Heart right ventricle (tissue), 16 donors: ENCODE measurements at regions of chr1 and their contacts with region 1.

Region 1: GRCh38 chr1:210394281-210394821 is 65.6 kb downstream of the HHAT start:
- DNase-seq: peak in 1 of 2 donors; percentile 21
- ATAC-seq: peak in 7 of 8 donors; percentile 55 to 87 (median 72)
- H3K4me3 ChIP-seq: no peak overlapping the region
- H3K27ac ChIP-seq: peak overlapping the region in 8 of 10 donors; percentile 22 to 71 (median 58)
- H3K4me1 ChIP-seq: peaks cover 0 to 21% (median 0%) of the 10 kb centered on the region in 9 donors
- H3K27me3 ChIP-seq: no peaks in the 10 kb centered on the region
- CTCF ChIP-seq: no peak

Region 2: GRCh38 chr1:210200124-210200736 is 194.1 kb before region 1 on chr1:
- intact Hi-C with region 1: loop called in 1 of 10 experiments (anchors 10 kb)
- DNase-seq: no peak
- ATAC-seq: no peak
- H3K4me3 ChIP-seq: no peak overlapping the region
- H3K27ac ChIP-seq: no peak overlapping the region
- H3K4me1 ChIP-seq: no peaks in the 10 kb centered on the region
- H3K27me3 ChIP-seq: peaks cover 0 to 8% (median 3%) of the 10 kb centered on the region in 7 donors
- CTCF ChIP-seq: peak in 6 of 9 donors; percentile 7 to 50 (median 32)

Region 3: GRCh38 chr1:210360852-210361477 is 33.4 kb before region 1 on chr1:
- intact Hi-C with region 1: loop called in 2 of 10 experiments (anchors 5 kb)
- DNase-seq: no peak
- ATAC-seq: peak in 7 of 8 donors; percentile 24 to 60 (median 56)
- H3K4me3 ChIP-seq: no peak overlapping the region
- H3K27ac ChIP-seq: peak overlapping the region in 2 of 10 donors; percentile 42 to 44
- H3K4me1 ChIP-seq: peaks cover 0 to 26% (median 11%) of the 10 kb centered on the region in 9 donors
- H3K27me3 ChIP-seq: no peaks in the 10 kb centered on the region
- CTCF ChIP-seq: peak; percentile 40 to 74 (median 62)